Prostate gland (tissue), 2 donors: ENCODE measurements at regions of chr3 and their contacts with region 1.

Region 1: GRCh38 chr3:68876112-68876713 is 56.1 kb downstream of the TAFA4 start:
- DNase-seq: peak; percentile 17
- H3K4me3 ChIP-seq: no peak overlapping the region
- H3K27ac ChIP-seq: no peak overlapping the region
- H3K4me1 ChIP-seq: no peaks in the 10 kb centered on the region
- H3K27me3 ChIP-seq: no peaks in the 10 kb centered on the region
- CTCF ChIP-seq: peak; percentile 49 to 86 (median 80)
- POLR2A ChIP-seq: no peak

Region 2: DNA sequence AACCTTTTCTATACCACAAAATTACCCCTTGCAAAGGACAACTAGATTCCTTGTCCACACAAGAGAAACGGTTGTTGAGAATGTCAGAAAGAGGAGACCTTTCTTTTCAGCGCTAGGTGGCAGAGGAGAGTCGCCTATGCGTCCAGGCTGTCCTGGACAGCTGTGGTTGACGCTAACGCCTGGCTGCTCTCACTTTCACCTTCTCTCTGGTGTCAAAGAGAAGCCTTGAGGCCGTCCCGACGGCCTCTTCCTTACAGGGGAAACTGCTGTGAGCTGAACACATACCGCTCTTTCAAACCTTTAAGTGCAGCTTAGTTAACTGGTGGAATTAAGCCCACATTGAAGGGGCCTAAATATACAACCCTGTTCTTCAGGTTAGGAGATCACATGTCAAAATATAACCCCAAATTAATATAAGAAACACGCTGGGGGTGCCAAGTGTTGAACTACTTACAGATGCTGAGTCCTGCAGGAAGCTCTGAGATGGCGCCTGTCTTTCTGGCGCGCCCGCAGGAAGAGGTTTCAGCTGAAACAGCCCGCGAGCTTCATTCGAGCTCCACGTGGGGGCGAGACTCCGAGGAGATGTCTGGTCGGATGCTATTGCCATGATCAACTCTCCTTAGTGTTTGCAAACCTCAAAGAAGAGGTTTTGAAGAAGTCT is 1904.2 kb before region 1 on chr3:
- intact Hi-C with region 1: loop called (anchors 5 kb)
- DNase-seq: peak; percentile 56
- H3K4me3 ChIP-seq: peak overlapping the region in 1 of 2 donors; percentile 2
- H3K27ac ChIP-seq: no peak overlapping the region
- H3K4me1 ChIP-seq: no peaks in the 10 kb centered on the region
- H3K27me3 ChIP-seq: no peaks in the 10 kb centered on the region
- CTCF ChIP-seq: peak; percentile 23 to 65 (median 54)
- POLR2A ChIP-seq: no peak

Region 3: GRCh38 chr3:67113802-67114407 is 1762.3 kb before region 1 on chr3:
- intact Hi-C with region 1: loop called (anchors 5 kb)
- DNase-seq: peak; percentile 74
- H3K4me3 ChIP-seq: no peak overlapping the region
- H3K27ac ChIP-seq: no peak overlapping the region
- H3K4me1 ChIP-seq: no peaks in the 10 kb centered on the region
- H3K27me3 ChIP-seq: no peaks in the 10 kb centered on the region
- CTCF ChIP-seq: peak; percentile 49 to 89 (median 78)
- POLR2A ChIP-seq: no peak

Region 4: DNA sequence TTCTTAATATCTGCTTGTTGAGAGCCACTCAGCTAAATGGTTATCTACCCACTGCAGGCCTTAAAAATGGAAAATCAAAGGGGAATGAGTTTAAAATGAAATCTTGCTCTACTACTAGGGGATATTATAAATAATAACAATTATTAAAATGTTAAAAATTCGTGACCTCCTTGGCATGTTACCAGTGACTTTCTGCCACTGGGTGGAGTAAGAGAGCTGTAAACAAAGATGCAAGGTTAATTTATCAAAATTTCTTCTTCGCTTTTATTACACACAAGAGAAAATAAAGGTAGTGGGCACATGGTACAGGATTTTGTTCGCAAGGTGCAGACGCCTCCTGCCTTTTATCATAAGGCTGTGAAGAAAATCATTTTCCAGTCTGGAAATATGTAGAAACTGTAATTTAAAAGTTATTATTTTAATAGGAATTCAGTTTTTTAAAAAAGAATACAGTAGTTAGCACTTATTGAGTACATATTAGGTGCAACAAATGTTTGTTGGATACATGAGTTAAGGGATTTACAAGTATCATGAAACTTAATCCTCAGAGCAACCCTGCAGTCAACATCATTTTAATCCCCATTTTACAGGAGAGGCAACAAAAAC is 1494.4 kb before region 1 on chr3:
- intact Hi-C with region 1: loop called (anchors 2 kb)
- DNase-seq: no peak
- H3K4me3 ChIP-seq: no peak overlapping the region
- H3K27ac ChIP-seq: no peak overlapping the region
- H3K4me1 ChIP-seq: no peaks in the 10 kb centered on the region
- H3K27me3 ChIP-seq: no peaks in the 10 kb centered on the region
- CTCF ChIP-seq: peak in 3 of 4 experiments; percentile 51 to 58 (median 51)
- POLR2A ChIP-seq: no peak

Region 5: DNA sequence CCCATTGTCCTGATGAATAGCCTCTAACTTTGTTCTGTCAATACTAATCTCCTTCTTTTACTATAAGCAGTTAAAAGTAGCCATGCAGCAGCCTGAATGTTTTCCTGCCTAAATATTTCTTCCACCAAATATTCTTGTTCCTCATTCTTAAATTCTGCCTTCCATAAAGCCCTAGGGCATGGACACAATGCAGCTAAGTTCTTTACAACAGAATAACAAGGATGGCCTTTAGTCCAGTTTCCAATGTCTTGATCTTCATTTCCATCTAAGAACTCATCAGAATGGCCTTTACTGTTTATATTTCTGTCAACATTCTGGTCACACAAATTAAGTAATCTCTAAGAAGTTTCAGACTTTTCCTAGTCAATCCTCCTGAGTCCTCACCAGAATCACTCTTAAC is 236.4 kb before region 1 on chr3:
- intact Hi-C with region 1: no loop called
- DNase-seq: no peak
- H3K4me3 ChIP-seq: no peak overlapping the region
- H3K27ac ChIP-seq: no peak overlapping the region
- H3K4me1 ChIP-seq: no peaks in the 10 kb centered on the region
- H3K27me3 ChIP-seq: no peaks in the 10 kb centered on the region
- CTCF ChIP-seq: no peak
- POLR2A ChIP-seq: no peak